ENCODE measurements at regions of chr19 and their contacts with region 1.

Region 1: GRCh38 chr19:49546825-49547565 is 19.2 kb downstream of the RCN3 start:
- DNase-seq: peak; percentile 53
- ATAC-seq: peak; percentile 92

Region 2: DNA sequence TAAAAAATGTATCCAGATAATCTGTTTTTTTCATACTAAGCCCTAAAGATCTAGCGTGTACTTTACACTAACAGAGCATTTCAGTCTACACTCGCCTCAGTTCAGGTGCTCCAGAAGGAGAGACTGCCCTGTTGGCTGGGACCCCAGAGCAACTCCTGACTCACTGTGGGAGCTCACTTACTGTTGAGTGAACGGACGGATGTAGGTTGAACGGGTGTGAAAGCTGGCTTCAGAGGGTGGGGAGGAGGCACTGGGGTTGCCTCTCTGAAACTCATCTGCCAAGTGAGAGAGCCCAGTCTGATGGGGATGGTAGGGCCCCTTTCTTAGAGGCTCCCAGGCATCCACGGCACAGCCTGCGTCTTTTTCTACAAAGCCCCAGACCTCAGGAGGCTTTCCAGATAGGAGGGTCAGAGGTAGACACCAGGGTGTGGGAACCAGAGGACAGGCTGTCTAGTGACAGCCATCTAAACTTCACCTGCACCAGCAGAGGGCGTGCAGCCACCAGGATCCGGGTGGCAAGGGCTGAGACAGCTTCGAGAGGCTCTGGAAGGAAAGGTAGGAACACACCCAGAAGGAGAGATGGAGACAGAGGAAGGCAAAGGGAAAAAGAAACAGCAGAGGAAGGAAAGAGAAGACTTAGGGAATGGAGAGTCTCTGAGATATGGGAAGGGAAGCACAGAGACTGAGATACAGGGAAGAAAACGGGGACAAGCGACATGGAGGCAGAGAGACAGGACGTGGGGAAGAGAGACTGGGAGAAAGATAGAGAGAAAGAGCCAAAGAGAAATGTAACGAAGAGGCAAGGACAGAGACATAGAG is 155.2 kb before region 1 on chr19:
- intact Hi-C with region 1: loop called (anchors 10 kb)
- DNase-seq: peak; percentile 85
- ATAC-seq: peak; percentile 90

Region 3: DNA sequence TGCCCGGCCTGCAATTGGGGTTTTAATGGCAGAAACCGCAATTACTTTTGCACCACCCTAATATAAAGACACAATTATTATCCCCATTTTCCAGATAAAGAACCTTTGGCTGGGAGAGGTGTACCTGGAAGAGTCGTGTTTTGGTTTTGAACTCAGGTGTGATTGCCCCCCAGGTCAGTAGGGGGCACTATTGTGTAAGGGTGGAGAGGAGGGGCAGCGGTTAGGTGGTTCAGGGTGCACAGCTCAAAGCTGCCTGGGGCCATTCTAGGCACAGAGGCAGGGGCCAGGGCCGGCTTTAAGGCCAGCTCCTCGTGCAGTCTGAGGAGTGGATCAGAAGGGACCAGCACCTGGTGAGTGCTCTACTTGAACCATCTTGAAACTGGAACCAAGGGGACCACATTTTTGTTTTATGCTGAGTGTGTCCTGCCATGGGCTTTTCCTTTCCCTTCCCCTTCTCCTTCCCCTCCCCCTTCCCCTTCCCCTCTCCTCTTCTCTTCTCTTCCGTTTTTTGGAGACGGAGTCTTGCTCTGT is 40.4 kb before region 1 on chr19:
- intact Hi-C with region 1: loop called (anchors 2 kb)
- DNase-seq: peak; percentile 66
- ATAC-seq: peak; percentile 66